A549 (cell line): ENCODE measurements at regions of chr5 and their contacts with region 1.

Region 1: DNA sequence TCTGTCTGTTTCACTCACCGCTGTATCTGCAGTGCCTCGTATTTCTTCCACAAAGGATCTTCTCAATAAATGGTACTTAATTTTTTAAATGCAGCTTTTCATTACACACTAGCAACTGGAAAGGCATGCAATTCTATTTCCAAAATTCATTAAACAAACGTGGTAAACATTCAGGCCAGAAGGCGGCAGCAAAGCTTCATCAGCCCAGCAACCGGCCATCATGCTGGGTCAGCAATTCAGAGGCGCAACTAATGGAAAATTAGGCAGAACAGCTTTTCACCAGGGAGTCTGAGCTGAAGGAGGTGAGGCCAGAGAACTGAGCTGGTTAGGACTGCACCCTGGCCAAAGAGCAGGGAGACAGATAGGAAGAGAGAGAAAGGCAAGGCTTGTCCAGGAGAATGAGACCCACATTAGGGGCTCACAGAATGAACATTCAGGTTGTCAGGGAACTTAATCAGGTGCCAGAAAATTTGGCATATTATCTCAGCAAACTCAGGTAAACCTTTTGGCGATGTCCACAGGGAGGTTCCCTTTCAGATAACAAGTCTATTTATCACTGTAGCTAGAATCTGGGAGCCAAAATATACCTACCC is 17.7 kb upstream of the RNF180 start:
- DNase-seq: peak; percentile 21 to 44
- ATAC-seq: peak; percentile 67 to 77; a peak in 4 of 6 replicates
- H3K4me3 ChIP-seq: no peak overlapping the region
- H3K27ac ChIP-seq: no peak overlapping the region
- H3K4me1 ChIP-seq: no peaks in the 10 kb centered on the region
- CTCF ChIP-seq: peak; percentile 78
- EP300 ChIP-seq: no peak
- POLR2A ChIP-seq: no peak
- RAD21 ChIP-seq: peak; percentile 81 to 86

Region 2: DNA sequence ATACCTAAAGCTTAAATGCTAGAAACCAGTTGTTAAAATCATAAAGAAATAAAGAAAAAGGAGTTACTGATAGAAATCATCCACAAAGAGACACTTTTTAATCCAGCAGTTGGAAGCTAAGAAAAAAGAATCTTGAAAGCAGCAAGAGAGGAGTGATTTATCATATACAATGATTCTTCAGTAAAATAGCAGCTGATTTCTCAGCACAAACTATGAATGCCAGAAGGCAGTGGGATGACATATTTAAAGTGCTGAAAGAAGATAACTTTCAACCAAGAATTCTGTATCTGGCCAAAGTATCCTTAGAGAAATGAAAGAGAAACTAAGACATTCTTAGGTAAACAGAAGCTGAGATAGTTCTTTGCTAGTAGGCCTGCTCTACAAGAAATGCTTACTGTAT is 551.7 kb before region 1 on chr5:
- CTCF ChIA-PET with region 1: no interaction called
- POLR2A ChIA-PET with region 1: no interaction called
- DNase-seq: no peak
- ATAC-seq: no peak
- H3K4me3 ChIP-seq: no peak overlapping the region
- H3K27ac ChIP-seq: no peak overlapping the region
- H3K4me1 ChIP-seq: no peaks in the 10 kb centered on the region
- CTCF ChIP-seq: no peak
- EP300 ChIP-seq: no peak
- POLR2A ChIP-seq: no peak
- RAD21 ChIP-seq: no peak

Region 3: DNA sequence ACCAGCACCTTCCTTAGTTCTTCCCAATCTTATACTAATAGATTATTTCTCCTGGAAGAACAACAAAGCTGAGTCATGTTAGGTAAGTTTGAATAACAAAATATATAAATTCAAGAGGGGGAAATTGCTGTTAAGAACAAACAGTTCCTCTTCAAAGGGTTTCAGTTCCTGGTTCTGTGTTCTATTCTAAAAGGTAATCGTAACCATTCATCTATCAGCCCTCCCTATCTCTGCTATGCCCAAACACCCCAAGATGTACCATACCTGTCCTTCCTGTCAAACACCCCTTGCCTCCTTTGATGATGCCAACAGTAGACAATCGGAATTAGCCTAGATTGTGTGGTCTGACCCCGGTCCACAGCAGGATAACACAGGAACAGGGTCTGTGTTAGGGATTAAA is 13.5 kb after region 1 on chr5:
- CTCF ChIA-PET with region 1: interaction called, 18 read pairs
- POLR2A ChIA-PET with region 1: no interaction called
- DNase-seq: no peak
- ATAC-seq: no peak
- H3K4me3 ChIP-seq: no peak overlapping the region
- H3K27ac ChIP-seq: no peak overlapping the region
- H3K4me1 ChIP-seq: no peaks in the 10 kb centered on the region
- CTCF ChIP-seq: no peak
- EP300 ChIP-seq: no peak
- POLR2A ChIP-seq: no peak
- RAD21 ChIP-seq: no peak

Region 4: DNA sequence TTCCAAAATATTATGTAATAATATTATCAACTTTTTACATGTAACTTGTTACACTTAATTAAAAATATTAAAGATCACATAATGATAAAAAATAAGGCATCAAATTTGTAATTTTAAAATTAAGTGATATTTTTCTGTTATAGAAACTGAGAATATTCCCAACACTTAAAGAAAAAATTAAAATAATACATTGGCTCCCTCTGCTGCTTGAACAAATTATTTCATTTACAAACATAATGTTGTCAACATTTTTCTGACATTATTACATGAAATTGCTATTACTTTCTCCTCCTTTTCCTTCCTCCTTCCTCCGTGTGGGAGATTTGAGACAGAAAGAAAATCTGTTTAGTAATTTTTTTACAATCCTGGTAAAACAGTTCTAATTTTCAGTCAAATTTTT is 60.0 kb after region 1 on chr5:
- CTCF ChIA-PET with region 1: interaction called, 17 read pairs
- POLR2A ChIA-PET with region 1: no interaction called
- DNase-seq: peak in 1 of 2 experiments; percentile 14
- ATAC-seq: no peak
- H3K4me3 ChIP-seq: no peak overlapping the region
- H3K27ac ChIP-seq: no peak overlapping the region
- H3K4me1 ChIP-seq: no peaks in the 10 kb centered on the region
- CTCF ChIP-seq: peak; percentile 43
- EP300 ChIP-seq: no peak
- POLR2A ChIP-seq: no peak
- RAD21 ChIP-seq: peak; percentile 50 to 62

Region 5: DNA sequence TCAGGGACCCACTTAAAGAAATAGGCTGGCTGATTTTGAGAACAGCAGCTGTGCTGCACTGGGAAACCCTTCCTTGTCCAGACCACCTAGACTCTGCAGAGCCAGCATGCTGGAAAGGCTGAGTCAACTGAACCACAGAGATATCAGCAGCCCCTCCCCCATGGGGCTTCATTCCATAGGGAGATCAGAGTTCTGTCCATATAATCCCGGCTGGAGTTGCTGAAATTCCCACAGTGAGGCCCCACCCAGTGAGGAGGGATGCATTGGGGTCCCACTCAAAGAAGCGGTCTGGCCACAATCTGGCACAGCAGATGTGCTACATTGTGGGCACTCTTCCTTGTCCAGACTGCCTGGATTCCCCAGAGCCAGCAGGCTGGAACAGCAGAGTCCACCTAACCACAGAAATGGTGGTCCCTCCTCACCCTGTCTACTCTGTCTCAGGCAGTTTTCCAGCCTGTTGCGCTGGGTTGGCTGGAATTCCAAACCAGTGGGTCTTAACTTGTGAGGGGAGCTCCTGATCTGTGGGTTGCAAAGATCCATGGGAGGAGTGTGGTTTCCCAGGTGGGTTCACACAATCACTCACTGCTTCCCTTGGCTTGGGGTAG is 144.8 kb after region 1 on chr5:
- CTCF ChIA-PET with region 1: no interaction called
- POLR2A ChIA-PET with region 1: no interaction called
- DNase-seq: no peak
- ATAC-seq: no peak
- H3K4me3 ChIP-seq: no peak overlapping the region
- H3K27ac ChIP-seq: no peak overlapping the region
- H3K4me1 ChIP-seq: no peaks in the 10 kb centered on the region
- CTCF ChIP-seq: no peak
- EP300 ChIP-seq: no peak
- POLR2A ChIP-seq: no peak
- RAD21 ChIP-seq: no peak

Region 6: GRCh38 chr5:64612344-64612961 is 464.5 kb after region 1 on chr5:
- CTCF ChIA-PET with region 1: interaction called, 28 read pairs
- POLR2A ChIA-PET with region 1: no interaction called
- DNase-seq: peak; percentile 7 to 53
- ATAC-seq: peak; percentile 80 to 81; a peak in 5 of 6 replicates
- H3K4me3 ChIP-seq: no peak overlapping the region
- H3K27ac ChIP-seq: no peak overlapping the region
- H3K4me1 ChIP-seq: no peaks in the 10 kb centered on the region
- CTCF ChIP-seq: peak; percentile 83
- EP300 ChIP-seq: no peak
- POLR2A ChIP-seq: no peak
- RAD21 ChIP-seq: peak; percentile 80 to 87